HepG2 (cell line): ENCODE measurements at regions of chr17 and their contacts with region 1.

Region 1: DNA sequence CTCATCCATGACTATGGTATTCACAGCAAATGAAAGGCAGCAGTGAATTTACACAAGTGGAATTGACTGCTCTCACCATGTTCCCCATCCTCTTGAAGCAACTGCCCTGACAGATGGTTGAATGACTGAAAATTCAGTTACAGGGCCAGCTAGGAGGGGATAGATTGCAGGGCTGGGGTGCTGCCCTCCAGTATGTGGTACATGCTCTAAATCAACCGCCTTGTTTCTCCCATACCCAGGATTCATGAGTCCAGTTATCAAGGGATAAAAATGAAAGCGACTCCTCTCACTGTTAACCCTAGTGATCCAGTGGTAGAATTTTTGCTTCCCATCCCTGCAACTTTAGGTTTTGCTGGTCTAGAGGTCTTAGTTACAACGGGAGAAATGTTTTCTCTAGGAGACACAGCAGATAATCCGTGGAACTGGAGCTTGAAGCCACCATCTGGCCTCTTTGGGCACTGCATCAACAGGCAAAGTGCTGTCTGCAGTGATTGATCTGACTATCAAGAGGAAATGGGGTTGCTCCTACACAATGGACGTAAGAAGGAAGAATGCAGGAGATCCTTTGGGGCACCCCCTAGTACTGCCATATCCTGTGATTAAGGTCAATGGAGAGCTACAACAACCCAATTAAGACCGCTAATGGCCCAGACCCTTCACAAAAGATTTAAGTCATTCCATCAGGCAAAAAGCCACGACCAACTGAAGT is 32.0 kb downstream of the SCPEP1 start:
- DNase-seq: peak; percentile 43
- ATAC-seq: peak; percentile 96
- H3K4me3 ChIP-seq: no peak overlapping the region
- H3K27ac ChIP-seq: no peak overlapping the region
- H3K4me1 ChIP-seq: no peaks in the 10 kb centered on the region
- H3K27me3 ChIP-seq: no peaks in the 10 kb centered on the region
- CTCF ChIP-seq: peak; percentile 80
- EP300 ChIP-seq: no peak
- POLR2A ChIP-seq: no peak
- RAD21 ChIP-seq: no peak; the same call in 1 of the 2 replicates

Region 2: GRCh38 chr17:57114085-57114673 is 104.3 kb after region 1 on chr17:
- CTCF ChIA-PET with region 1: interaction called, 3 read pairs
- POLR2A ChIA-PET with region 1: no interaction called
- in situ Hi-C with region 1: loop called (anchors 10 kb)
- intact Hi-C with region 1: loop called (anchors 5 kb)
- DNase-seq: peak; percentile 41
- ATAC-seq: peak; percentile 75
- H3K4me3 ChIP-seq: no peak overlapping the region
- H3K27ac ChIP-seq: no peak overlapping the region
- H3K4me1 ChIP-seq: peaks cover 30% of the 10 kb centered on the region
- H3K27me3 ChIP-seq: no peaks in the 10 kb centered on the region
- CTCF ChIP-seq: peak; percentile 93
- EP300 ChIP-seq: no peak
- POLR2A ChIP-seq: no peak
- RAD21 ChIP-seq: peak; percentile 79